Mammary epithelial cell (primary cell): ENCODE measurements at regions of chr2 and their contacts with region 1.

Region 1: GRCh38 chr2:102342891-102343290 is 12.7 kb upstream of the IL18R1 start:
- DNase-seq: no peak
- H3K4me3 ChIP-seq: no peak overlapping the region
- H3K27ac ChIP-seq: no peak overlapping the region
- H3K4me1 ChIP-seq: no peaks in the 10 kb centered on the region
- H3K27me3 ChIP-seq: no peaks in the 10 kb centered on the region
- CTCF ChIP-seq: peak; percentile 7 to 60

Region 2: DNA sequence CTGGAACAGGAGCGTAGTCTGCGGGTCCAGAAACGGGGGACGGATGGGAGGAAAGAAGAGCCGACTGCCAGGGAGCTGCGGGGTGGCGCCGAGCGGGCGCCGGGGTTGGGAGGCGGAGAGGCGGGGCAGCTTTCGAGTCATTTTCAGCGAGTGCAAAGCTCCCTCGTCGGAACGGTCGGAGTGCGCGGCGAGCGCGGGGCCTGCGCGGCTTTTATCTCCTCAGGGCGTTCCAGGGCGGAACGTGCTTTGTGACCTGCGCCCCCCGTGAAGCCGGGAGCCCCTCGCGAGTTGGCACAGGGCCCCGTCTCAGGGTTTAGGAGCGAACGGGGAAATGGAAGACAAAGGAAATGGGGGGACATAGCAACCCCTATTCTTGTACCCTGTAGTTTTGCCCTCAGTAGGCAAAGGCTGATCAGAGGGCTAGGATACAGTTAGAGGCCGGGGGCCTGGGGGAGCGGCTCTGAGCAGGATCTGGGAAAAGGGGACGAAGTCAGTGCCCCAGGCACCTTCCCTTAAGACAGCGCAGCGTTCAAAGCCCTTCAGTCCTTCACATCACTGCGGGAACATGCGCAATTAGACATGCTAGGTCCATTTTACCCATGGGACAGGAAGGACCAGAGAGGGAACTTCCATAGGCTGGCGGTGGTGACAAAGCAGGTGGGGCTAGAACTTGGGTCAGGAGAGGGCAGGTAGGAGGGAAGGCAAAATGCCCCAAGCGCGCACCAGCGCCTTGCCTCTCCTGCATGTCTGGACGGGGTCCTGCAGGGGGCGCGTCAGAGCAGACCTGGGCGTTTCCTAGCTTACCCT is 91.6 kb before region 1 on chr2:
- CTCF ChIA-PET with region 1: interaction called, 5 read pairs
- dilution Hi-C with region 1: no loop called
- in situ Hi-C with region 1: no loop called
- intact Hi-C with region 1: loop called (anchors 1 kb)
- DNase-seq: no peak
- H3K4me3 ChIP-seq: peak overlapping the region; percentile 5 to 43 (median 36)
- H3K27ac ChIP-seq: no peak overlapping the region
- H3K4me1 ChIP-seq: peaks cover 9% of the 10 kb centered on the region
- H3K27me3 ChIP-seq: no peaks in the 10 kb centered on the region
- CTCF ChIP-seq: peak; percentile 39 to 62

Region 3: DNA sequence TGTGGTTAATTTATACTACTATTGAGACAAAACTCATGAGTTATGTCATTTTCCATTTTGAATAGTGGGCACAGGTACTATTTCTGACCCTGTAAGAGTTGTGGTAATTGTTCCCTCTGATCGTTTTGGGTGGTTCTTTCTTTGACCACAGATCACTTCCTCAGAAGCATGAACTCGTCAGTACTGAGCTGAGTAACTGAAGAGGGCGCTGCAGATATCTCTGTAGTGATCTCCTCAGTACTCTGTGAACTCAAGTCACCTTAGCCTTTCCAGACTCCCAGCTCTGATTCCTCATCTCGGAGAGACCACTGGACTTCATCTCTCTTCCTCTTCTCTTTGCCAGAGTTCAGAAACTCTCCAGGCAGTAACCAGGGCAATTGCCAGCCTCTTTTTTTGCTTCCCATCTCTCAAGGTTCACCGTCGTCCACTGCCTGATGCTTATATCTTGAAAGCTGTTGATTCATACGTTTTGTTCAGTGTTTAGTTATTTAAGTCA is 41.0 kb before region 1 on chr2:
- CTCF ChIA-PET with region 1: no interaction called
- dilution Hi-C with region 1: no loop called
- in situ Hi-C with region 1: no loop called
- intact Hi-C with region 1: loop called (anchors 1 kb)
- DNase-seq: peak; percentile 29
- H3K4me3 ChIP-seq: no peak overlapping the region
- H3K27ac ChIP-seq: no peak overlapping the region
- H3K4me1 ChIP-seq: no peaks in the 10 kb centered on the region
- H3K27me3 ChIP-seq: peaks cover 4% of the 10 kb centered on the region
- CTCF ChIP-seq: peak; percentile 36 to 65